Common myeloid progenitor, CD34-positive (primary cell): ENCODE measurements at regions of chr1 and their contacts with region 1.

Region 1: GRCh38 chr1:39609618-39610331 is 29.7 kb downstream of the HEYL start:
- DNase-seq: peak; percentile 67 to 75 (median 70)
- H3K4me3 ChIP-seq: no peak overlapping the region
- H3K27ac ChIP-seq: no peak overlapping the region
- H3K4me1 ChIP-seq: peaks cover 0 to 4% (median 0%) of the 10 kb centered on the region in 4 experiments
- H3K27me3 ChIP-seq: peaks cover 0 to 3% (median 0%) of the 10 kb centered on the region in 5 experiments

Region 2: DNA sequence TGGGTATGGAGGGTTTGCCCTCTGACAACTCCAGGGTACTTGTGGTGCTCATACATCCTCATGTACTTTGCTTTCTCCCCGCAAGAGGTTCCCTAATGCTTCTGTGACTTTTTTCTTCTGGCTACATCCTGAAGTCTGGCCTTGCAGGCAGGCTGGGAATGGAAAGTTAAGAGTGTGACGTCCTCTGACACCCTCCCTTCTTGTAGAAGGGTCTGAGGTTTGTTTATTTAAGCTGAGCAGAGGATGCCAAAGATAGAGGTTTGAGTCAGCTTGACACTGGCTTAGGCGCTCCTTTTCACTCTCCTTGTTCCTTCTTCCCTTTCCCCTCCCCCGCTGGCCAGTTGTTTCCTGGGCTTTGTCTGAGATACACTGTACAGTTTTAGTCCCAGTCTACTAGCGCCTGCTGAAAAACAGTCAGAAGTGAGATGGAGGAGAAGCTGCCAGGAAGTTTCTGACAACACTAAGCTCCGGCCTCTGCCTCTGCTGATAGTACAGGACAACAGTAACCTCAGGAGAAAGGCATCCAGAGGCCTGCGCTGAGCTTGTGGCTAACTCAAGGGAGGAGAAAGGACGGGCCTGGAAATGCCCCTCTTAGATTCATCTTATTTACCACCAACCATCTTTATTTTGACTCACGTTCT is 405.2 kb before region 1 on chr1 and contains the start of gene MACF1:
- CTCF ChIA-PET with region 1: no interaction called
- POLR2A ChIA-PET with region 1: no interaction called
- DNase-seq: peak; percentile 79 to 91 (median 86)
- H3K4me3 ChIP-seq: peak within 1 kb of the TSS; percentile 42 to 99 (median 85)
- H3K27ac ChIP-seq: peak within 1 kb of the TSS; percentile 82 to 91
- H3K4me1 ChIP-seq: peaks cover 7 to 60% (median 31%) of the 10 kb centered on the region in 4 experiments
- H3K27me3 ChIP-seq: no peaks in the 10 kb centered on the region

Region 3: DNA sequence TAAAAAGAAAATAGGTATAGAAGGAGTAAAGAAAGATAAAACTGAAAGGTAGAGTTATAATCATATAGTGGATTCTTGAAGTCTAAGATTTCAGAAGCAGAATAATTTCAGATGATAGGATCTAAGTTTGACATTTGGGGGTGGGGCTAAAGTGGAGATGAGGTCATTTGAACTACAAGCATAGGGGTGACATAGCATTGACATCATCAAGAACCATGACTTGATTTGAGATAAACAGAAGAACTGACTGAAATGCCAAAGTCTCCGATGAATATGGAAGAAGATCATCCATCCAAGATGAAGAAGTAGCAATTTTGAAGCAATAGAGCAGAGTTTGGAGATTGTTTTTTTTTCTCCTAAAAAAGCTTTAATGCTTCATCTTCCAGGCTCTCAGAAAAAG is 282.9 kb before region 1 on chr1:
- CTCF ChIA-PET with region 1: no interaction called
- POLR2A ChIA-PET with region 1: no interaction called
- DNase-seq: peak in 2 of 3 donors; percentile 3 to 5
- H3K4me3 ChIP-seq: no peak overlapping the region
- H3K27ac ChIP-seq: no peak overlapping the region
- H3K4me1 ChIP-seq: no peaks in the 10 kb centered on the region
- H3K27me3 ChIP-seq: no peaks in the 10 kb centered on the region

Region 4: DNA sequence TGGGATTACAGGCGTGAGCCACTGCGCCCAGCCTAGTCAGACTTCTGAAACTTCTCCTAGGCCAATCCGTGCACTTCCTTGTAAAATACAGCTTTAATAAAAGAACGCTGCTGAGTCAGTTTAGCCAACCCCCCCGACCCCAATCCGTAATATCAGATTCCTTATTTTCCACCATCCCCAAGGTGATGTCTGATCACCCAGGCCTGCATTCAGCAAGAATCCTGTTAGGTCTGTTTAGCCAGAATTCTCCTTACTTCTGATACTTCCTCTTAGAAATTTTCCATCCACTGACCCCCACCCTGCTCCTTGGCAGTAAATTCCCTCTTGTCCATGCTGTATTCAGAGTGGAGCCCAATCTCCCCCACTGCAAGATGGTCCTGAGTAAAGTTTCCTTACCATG is 21.7 kb before region 1 on chr1:
- CTCF ChIA-PET with region 1: interaction called, 11 read pairs
- POLR2A ChIA-PET with region 1: interaction called, 3 read pairs
- DNase-seq: no peak
- H3K4me3 ChIP-seq: no peak overlapping the region
- H3K27ac ChIP-seq: no peak overlapping the region
- H3K4me1 ChIP-seq: peaks cover 0 to 4% (median 2%) of the 10 kb centered on the region in 4 experiments
- H3K27me3 ChIP-seq: no peaks in the 10 kb centered on the region

Region 5: GRCh38 chr1:39623053-39623452 is 13.3 kb after region 1 on chr1:
- CTCF ChIA-PET with region 1: interaction called, 27 read pairs
- POLR2A ChIA-PET with region 1: no interaction called
- DNase-seq: no peak
- H3K4me3 ChIP-seq: no peak overlapping the region
- H3K27ac ChIP-seq: no peak overlapping the region
- H3K4me1 ChIP-seq: no peaks in the 10 kb centered on the region
- H3K27me3 ChIP-seq: peaks cover 0 to 12% (median 0%) of the 10 kb centered on the region in 5 experiments

Region 6: DNA sequence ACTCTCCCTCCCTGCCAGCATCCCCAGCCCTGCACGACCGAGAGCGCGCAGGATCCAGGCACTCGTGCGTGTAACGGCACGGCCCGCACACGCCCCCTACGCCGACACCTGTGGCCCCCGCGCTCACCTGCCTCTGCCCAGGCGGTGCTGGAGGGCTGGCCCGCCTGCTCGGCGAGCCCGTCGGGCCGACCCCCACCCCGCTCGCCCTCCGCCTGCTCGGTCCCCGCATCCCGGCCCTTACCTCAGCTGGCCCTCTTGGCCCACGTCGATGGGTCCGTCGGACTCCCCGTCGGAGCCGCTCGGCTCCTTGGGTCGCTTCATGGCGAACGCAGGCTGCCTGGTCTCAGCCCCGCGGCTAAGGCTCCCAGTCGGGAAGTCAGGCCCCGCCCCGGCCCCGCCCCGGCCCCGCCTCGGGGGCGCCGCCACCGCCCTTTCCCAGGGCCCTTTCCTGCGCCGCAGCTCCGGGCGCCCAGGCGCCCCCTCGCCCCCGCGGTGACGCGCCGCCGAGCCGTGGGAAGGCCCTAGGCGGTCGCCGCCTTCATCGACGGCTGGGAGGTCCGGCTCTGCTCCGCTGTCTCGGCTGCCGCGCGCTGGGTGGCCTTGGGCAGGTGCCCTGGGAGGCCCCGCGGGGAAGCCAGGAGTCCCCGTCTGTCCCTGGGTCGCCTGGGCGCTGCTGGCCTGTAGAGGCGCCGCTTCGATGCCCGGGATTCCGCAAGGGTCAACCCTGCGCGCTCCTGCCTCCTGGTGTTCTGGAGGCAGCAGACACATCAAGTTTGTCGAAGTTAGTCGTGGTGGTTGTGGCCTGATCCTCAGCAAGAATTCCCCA is 29.7 kb after region 1 on chr1 and contains the start of gene HEYL:
- CTCF ChIA-PET with region 1: interaction called, 11 read pairs
- POLR2A ChIA-PET with region 1: interaction called, 3 read pairs
- DNase-seq: peak; percentile 82 to 86 (median 84)
- H3K4me3 ChIP-seq: peak within 1 kb of the TSS; percentile 16 to 82 (median 62)
- H3K27ac ChIP-seq: peak within 1 kb of the TSS in 1 of 2 experiments; percentile 20
- H3K4me1 ChIP-seq: peaks cover 0 to 10% (median 3%) of the 10 kb centered on the region in 4 experiments
- H3K27me3 ChIP-seq: peaks cover 0 to 34% (median 4%) of the 10 kb centered on the region in 5 experiments

Region 7: DNA sequence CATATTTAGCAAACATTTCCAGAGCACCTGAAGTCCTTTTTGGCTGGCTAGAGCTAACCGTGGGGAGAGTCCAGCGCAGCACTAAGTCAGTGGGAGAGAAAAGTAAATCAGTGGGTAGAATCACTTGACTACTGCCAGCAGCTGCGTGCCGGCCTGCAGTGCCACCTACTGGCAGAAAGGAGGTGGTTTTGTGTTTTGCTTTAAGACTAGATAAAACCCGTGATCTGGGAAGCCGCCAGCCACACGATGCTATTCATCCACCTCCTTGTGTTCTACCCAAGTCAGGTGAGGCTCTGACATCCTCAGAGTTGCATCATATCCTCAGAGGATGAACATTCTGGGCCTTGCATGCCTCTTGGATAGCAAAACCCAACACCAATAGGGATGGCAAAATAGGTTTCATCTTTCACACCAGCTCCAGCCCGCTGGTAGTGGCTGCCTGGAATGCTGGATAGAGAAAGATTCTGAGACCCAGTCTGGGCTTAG is 43.8 kb after region 1 on chr1:
- CTCF ChIA-PET with region 1: interaction called, 250 read pairs
- POLR2A ChIA-PET with region 1: no interaction called
- DNase-seq: peak; percentile 73 to 85 (median 80)
- H3K4me3 ChIP-seq: no peak overlapping the region
- H3K27ac ChIP-seq: no peak overlapping the region
- H3K4me1 ChIP-seq: peaks cover 0 to 4% (median 0%) of the 10 kb centered on the region in 4 experiments
- H3K27me3 ChIP-seq: peaks cover 0 to 16% (median 0%) of the 10 kb centered on the region in 5 experiments

Region 8: DNA sequence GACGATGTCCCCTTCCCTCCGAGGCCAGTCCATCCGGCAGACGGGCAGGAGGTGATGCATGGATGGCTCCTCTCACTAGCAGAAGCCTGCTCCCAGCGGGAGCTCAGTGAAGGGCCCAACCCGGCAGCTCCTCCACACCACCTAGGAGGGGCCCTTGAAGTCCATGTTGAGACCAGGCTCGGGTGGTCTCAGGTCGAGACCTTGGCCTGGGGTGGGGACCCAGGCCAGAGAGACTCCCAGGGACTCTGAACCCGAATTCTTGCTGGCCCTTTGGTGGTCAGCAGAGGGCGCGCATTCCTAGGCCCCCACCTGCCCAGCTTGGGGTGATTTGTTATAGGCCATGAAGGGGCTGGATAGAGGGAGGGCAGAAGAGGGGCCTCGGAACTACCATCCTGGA is 62.8 kb after region 1 on chr1:
- CTCF ChIA-PET with region 1: interaction called, 10 read pairs
- POLR2A ChIA-PET with region 1: no interaction called
- DNase-seq: peak in 2 of 3 donors; percentile 13 to 26
- H3K4me3 ChIP-seq: peak overlapping the region in 3 of 7 experiments; percentile 58 to 70 (median 59)
- H3K27ac ChIP-seq: no peak overlapping the region
- H3K4me1 ChIP-seq: peaks cover 0 to 16% (median 12%) of the 10 kb centered on the region in 4 experiments
- H3K27me3 ChIP-seq: peaks cover 15 to 57% (median 44%) of the 10 kb centered on the region in 5 experiments

Region 9: DNA sequence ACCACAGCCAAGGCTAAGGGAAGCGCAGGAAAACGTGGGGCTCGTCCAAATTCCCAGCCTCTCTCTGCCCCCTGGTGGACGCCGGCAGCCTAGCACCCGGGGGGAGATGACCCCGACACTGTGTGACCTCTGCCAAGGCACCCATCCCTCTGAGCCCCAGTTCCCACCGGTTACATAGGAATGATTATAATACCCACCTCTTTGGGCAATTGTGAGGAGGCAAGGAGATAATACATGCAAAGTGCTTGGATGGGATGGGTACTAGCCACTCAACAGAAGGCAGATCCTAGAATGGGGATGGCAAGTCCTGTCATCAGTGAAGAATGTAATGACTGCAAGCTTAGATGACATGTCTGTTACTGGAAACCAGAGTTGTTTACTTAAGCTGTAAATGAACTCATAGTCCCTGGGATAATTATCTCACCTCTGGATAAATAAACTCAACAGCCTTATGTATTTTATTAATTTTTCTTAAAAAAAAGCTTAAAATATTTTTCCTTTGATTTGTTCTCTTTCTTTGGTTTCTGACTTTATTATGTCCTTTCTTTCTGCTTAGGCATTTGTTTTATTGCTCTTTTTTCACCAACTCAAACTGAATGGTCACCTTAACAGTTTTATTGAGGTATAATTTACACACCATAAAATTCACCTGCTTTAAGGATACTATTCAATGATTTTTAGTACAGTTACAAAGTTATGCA is 190.1 kb after region 1 on chr1:
- CTCF ChIA-PET with region 1: no interaction called
- POLR2A ChIA-PET with region 1: no interaction called
- DNase-seq: peak; percentile 42 to 61 (median 54)
- H3K4me3 ChIP-seq: peak overlapping the region in 2 of 7 experiments; percentile 30 to 48
- H3K27ac ChIP-seq: no peak overlapping the region
- H3K4me1 ChIP-seq: peaks cover 0 to 16% (median 8%) of the 10 kb centered on the region in 4 experiments
- H3K27me3 ChIP-seq: no peaks in the 10 kb centered on the region